Heart left ventricle (tissue), 16 donors: ENCODE measurements at regions of chr17 and their contacts with region 1.

Region 1: GRCh38 chr17:29883497-29883896 is 46.5 kb downstream of the SSH2 start:
- DNase-seq: no peak
- ATAC-seq: no peak
- H3K4me3 ChIP-seq: no peak overlapping the region
- H3K27ac ChIP-seq: no peak overlapping the region
- H3K4me1 ChIP-seq: peaks cover 0 to 27% (median 9%) of the 10 kb centered on the region in 12 donors
- H3K27me3 ChIP-seq: no peaks in the 10 kb centered on the region
- CTCF ChIP-seq: no peak
- POLR2A ChIP-seq: no peak

Region 2: DNA sequence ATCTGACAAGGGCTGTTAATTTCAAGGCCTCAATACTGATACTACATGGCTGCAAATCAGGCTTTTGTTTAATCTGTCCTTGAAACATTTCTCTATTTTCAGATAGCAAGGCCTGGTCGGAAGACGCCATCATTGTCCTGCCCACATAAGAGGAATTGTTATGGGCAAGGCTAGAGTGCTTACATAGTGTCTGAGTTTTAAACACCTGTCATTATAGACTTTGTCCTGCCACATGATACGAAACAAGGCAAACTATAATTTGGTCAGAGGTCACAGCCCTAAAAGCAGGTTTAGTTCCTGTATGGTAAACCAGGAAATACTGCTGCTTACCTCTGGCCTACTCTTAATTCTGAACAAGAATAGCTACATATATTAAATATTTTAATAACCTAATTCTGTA is 57.9 kb before region 1 on chr17:
- intact Hi-C with region 1: loop called in 1 of 10 experiments (anchors 10 kb)
- DNase-seq: no peak
- ATAC-seq: no peak
- H3K4me3 ChIP-seq: no peak overlapping the region
- H3K27ac ChIP-seq: no peak overlapping the region
- H3K4me1 ChIP-seq: peaks cover 0 to 4% (median 0%) of the 10 kb centered on the region in 12 donors
- H3K27me3 ChIP-seq: no peaks in the 10 kb centered on the region
- CTCF ChIP-seq: no peak
- POLR2A ChIP-seq: no peak

Region 3: GRCh38 chr17:29924786-29925185 is 41.3 kb after region 1 on chr17:
- intact Hi-C with region 1: no loop called
- DNase-seq: no peak
- ATAC-seq: no peak
- H3K4me3 ChIP-seq: no peak overlapping the region
- H3K27ac ChIP-seq: no peak overlapping the region
- H3K4me1 ChIP-seq: peaks cover 0 to 33% (median 23%) of the 10 kb centered on the region in 12 donors
- H3K27me3 ChIP-seq: no peaks in the 10 kb centered on the region
- CTCF ChIP-seq: no peak
- POLR2A ChIP-seq: no peak